ENCODE measurements at regions of chr4 and their contacts with region 1.

Region 1: DNA sequence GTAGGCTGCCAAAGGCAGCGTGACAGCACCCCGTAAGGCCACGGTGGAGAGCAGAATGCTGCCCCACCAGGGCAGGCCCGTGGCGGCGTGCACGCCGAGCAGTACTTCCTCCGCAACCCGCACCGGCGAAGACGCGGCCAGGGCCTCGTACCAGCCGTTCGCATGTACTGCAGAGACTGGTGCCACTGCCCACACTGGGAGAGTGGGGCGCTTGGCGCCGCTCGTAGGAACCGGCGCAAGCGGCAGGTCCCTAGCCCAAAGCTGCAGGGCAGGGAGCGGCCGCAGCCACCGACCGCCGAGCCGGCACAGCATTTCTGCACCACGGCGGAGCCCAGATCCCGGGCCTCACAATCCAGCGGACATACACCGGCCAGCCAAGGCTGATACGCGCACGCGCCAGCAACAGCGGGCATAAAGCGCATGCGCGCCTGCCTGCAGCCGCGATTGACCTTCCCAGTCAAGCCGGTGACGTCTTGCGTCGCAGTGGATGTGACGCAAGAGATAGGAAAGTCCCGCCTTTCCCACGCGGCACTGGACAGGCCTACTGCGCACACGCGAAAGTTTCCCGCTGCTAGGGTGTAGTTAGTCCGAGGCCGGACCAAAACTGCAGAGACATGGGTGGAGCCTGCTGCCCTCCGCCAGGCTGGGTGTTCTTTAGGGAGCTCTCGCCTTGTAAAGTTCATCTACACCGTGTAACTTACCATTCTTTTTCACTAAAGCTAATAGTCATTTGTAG is at the start of gene COX18:
- DNase-seq: peak; percentile 99
- H3K4me3 ChIP-seq: peak within 1 kb of the TSS; percentile 67 to 90 (median 74)
- H3K27ac ChIP-seq: peak within 1 kb of the TSS; percentile 97 to 99 (median 98)
- H3K4me1 ChIP-seq: peaks cover 8 to 55% (median 33%) of the 10 kb centered on the region in 6 donors
- H3K27me3 ChIP-seq: no peaks in the 10 kb centered on the region
- CTCF ChIP-seq: peak in 4 of 11 experiments; percentile 10 to 36 (median 18)
- POLR2A ChIP-seq: peak; percentile 44 to 90 (median 78)
- total RNA-seq, gene COX18: 12.2 to 28.3 (median 15.1) TPM

Region 2: GRCh38 chr4:72410158-72410557 is 659.3 kb before region 1 on chr4:
- intact Hi-C with region 1: no loop called
- DNase-seq: no peak
- H3K4me3 ChIP-seq: no peak overlapping the region
- H3K27ac ChIP-seq: no peak overlapping the region
- H3K4me1 ChIP-seq: no peaks in the 10 kb centered on the region
- H3K27me3 ChIP-seq: no peaks in the 10 kb centered on the region
- CTCF ChIP-seq: no peak
- POLR2A ChIP-seq: no peak

Region 3: GRCh38 chr4:72690771-72691170 is 378.7 kb before region 1 on chr4:
- intact Hi-C with region 1: no loop called
- DNase-seq: no peak
- H3K4me3 ChIP-seq: no peak overlapping the region
- H3K27ac ChIP-seq: no peak overlapping the region
- H3K4me1 ChIP-seq: no peaks in the 10 kb centered on the region
- H3K27me3 ChIP-seq: no peaks in the 10 kb centered on the region
- CTCF ChIP-seq: no peak
- POLR2A ChIP-seq: no peak

Region 4: DNA sequence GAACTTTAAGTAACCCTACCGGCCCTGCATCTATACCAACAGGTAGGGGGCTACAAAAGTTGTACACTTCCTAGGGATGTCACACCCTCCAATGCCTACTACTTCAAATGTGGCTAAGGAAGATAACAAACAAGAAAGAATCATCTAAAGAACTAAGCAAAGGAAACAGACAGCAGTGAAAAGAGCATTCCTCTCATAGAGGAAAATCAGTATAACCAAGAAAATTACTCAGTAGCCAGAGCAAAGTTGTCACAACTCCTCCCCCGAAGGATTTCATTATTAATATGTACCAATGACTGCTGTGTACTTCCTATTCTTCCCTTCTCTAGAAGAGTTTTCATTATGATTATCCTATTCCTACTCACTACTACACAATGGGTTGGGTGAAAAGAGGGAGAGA is 176.4 kb after region 1 on chr4:
- intact Hi-C with region 1: loop called (anchors 10 kb)
- DNase-seq: no peak
- H3K4me3 ChIP-seq: no peak overlapping the region
- H3K27ac ChIP-seq: no peak overlapping the region
- H3K4me1 ChIP-seq: peaks cover 0 to 79% (median 43%) of the 10 kb centered on the region in 6 donors
- H3K27me3 ChIP-seq: no peaks in the 10 kb centered on the region
- CTCF ChIP-seq: no peak
- POLR2A ChIP-seq: no peak

Region 5: DNA sequence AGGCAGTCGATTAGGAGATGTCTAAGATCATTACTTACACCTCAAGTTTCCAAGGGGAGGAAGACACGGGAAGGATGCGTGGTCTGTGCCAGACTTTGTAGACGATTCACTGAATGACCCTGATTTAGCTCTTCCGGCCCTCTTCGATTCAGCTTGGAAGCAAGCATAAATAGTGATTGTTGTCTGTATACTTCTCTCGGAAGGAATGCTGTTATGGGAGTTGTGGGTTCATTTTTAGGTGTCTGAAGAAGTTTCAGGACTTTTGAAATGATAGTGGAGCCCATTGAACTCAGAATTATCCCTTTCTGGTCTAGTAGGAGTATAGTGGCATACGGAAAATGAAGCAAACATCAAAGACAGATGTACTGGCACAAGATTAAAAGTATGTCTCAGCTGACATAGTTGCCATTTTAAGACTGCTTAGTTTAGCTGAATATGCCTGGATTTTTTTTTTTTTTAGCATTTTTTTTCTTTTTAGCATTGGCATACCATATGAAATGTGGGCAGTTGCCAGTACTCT is 190.1 kb after region 1 on chr4:
- intact Hi-C with region 1: loop called (anchors 5 kb)
- DNase-seq: no peak
- H3K4me3 ChIP-seq: peak overlapping the region; percentile 67 to 94 (median 80)
- H3K27ac ChIP-seq: peak overlapping the region; percentile 86 to 99 (median 98)
- H3K4me1 ChIP-seq: peaks cover 28 to 65% (median 51%) of the 10 kb centered on the region in 6 donors
- H3K27me3 ChIP-seq: no peaks in the 10 kb centered on the region
- CTCF ChIP-seq: no peak
- POLR2A ChIP-seq: no peak

Measured in spleen (tissue), 13 donors.